Lower leg skin (tissue), 4 donors: ENCODE measurements at regions of chrX and their contacts with region 1.

Region 1: GRCh38 chrX:99051639-99052038 is 1358.4 kb downstream of the PCDH19 start:
- DNase-seq: no peak
- H3K4me3 ChIP-seq: no peak overlapping the region
- CTCF ChIP-seq: no peak
- POLR2A ChIP-seq: no peak

Region 2: DNA sequence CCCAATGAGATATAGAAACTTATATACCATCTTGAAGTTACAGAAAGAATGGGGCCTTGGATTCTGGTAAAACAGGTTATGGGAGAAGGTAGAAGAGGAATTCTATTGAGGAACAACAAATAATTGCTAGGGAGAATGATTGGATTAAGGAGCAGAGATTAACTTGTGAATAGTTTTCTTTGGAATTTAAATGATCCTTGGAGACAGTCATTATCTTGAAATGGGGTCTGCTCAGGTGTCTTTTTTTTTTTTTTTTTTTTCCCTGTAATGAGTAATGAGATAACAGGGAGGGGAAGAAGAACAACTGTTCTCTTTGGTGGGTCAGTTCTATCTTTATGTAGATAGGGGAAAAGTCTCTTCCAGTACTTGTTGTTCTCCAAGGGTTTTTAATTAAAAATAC is 761.9 kb before region 1 on chrX:
- intact Hi-C with region 1: no loop called
- DNase-seq: no peak
- H3K4me3 ChIP-seq: no peak overlapping the region
- CTCF ChIP-seq: no peak
- POLR2A ChIP-seq: no peak

Region 3: DNA sequence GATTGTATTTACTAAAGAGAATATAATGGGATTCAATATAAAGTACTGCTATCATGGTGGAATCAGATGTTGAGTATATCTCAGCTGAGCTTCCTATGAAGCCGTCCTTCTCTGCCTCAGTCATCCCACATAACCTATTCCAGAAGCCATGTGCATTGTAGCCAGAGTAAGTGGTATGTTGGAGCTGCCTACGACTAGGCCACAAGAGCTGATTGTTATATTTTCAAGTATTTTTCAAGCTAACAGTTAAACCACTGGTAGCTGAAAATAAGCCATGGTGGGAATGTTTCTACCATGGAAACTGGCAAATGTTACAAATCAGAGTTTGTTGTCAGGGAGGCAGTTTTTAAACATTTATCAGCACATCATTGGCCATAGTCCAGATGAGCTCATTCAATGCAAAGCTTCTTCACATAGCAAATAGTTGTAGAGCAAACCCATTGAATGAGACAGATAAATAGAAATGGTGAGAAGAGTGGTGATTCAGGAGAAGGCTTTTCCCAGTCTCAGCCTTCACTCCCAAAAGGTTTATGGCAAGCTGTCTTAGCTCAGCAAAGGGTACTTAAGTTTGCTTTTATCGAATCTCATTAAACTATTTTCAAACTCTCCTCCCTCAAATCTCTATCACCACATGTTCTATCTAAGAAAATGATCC is 922.1 kb after region 1 on chrX:
- intact Hi-C with region 1: loop called (anchors 10 kb)
- DNase-seq: no peak
- H3K4me3 ChIP-seq: no peak overlapping the region
- CTCF ChIP-seq: no peak
- POLR2A ChIP-seq: no peak